ENCODE measurements at regions of chr2 and their contacts with region 1.

Region 1: DNA sequence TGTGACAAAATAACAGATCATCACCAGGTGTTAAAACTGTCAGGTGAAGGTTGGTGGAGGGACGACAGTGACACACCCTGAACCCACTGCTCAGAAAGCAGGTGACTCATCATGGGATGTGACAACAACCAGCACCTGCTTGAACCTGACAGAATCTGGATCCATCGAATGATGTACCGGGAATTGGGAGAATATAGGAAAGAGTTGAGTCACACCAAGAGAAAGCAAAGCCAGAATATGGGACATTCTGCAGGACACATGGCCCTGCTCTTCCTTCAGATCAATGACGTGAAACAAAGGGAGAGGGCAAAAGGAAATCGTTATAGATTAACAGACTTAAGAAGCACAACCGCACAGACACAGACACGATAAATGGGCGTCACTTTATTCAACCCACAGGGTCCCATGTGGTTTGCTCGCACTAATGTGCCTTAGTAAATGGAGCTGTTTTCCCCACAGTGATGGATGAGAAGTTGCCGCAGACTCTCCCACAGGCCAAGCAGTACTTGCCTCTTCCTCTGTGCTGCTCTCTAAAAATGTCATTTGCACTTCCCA is 100.1 kb downstream of the CRACDL start:
- DNase-seq: no peak
- H3K4me3 ChIP-seq: no peak overlapping the region
- H3K27ac ChIP-seq: no peak overlapping the region
- H3K4me1 ChIP-seq: peaks cover 0 to 3% (median 0%) of the 10 kb centered on the region in 4 donors
- H3K27me3 ChIP-seq: no peaks in the 10 kb centered on the region
- CTCF ChIP-seq: no peak

Region 2: GRCh38 chr2:98649135-98649991 is 186.5 kb before region 1 on chr2:
- intact Hi-C with region 1: loop called (anchors 2 kb)
- DNase-seq: peak; percentile 80 to 90
- H3K4me3 ChIP-seq: no peak overlapping the region
- H3K27ac ChIP-seq: no peak overlapping the region
- H3K4me1 ChIP-seq: no peaks in the 10 kb centered on the region
- H3K27me3 ChIP-seq: no peaks in the 10 kb centered on the region
- CTCF ChIP-seq: peak; percentile 96 to 99